B cell (primary cell): ENCODE measurements at regions of chr1 and their contacts with region 1.

Region 1: DNA sequence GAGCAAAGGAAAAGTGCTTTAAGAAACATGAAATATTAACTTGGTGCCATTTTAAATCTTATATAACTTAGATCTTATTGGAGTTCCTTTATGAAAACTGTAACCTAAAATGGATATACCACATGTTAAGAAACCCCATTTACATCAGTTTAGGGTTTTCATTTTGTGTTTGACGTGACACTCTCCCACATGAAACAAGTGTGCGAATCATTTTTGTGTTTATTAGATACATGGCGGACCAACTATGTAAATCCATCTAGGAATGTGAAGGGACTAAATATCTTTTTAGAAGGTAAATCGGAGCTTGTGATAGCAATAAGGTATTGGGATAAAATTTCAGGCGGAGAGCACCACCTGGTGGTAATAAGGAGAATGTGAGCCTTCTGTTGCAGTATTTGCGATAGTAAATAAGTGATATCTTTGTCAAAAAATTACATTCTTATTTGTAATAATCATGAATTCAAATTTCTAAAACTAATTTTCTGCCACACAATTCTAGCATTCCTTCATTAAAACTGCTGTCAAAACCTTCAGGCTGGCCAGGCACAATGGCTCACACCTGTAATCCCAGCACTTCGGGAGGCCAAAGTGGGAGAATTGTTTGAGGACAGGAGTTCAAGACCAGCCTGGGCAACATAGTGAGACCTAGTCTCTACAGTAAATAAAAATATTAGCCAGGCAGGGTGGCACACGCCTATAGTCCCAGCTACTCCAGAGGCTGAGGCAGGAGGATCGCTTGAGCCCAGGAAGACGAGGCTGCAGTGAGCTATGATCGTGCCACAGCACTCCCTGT is 31.3 kb downstream of the SMAP2 start:
- DNase-seq: peak; percentile 84
- ATAC-seq: peak; percentile 36
- H3K4me3 ChIP-seq: peak overlapping the region in 1 of 5 experiments; percentile 4
- H3K4me3 Mint-ChIP-seq: peak overlapping the region; percentile 61
- H3K27ac ChIP-seq: peak overlapping the region; percentile 76 to 100
- H3K27ac Mint-ChIP-seq: peak overlapping the region; percentile 92
- H3K4me1 ChIP-seq: peaks cover 54 to 58% of the 10 kb centered on the region in 2 donors
- H3K4me1 Mint-ChIP-seq: peaks cover 62% of the 10 kb centered on the region
- H3K27me3 ChIP-seq: no peaks in the 10 kb centered on the region
- H3K27me3 Mint-ChIP-seq: no peaks in the 10 kb centered on the region
- CTCF ChIP-seq: peak; percentile 88

Region 2: GRCh38 chr1:40257688-40258444 is 147.0 kb before region 1 on chr1 and contains the start of gene ZMPSTE24:
- CTCF ChIA-PET with region 1: interaction called, 6 read pairs
- POLR2A ChIA-PET with region 1: no interaction called
- intact Hi-C with region 1: loop called (anchors 10 kb)
- DNase-seq: peak; percentile 98
- ATAC-seq: peak; percentile 94
- H3K4me3 ChIP-seq: peak within 1 kb of the TSS; percentile 80 to 98 (median 96)
- H3K4me3 Mint-ChIP-seq: peak within 1 kb of the TSS; percentile 97
- H3K27ac ChIP-seq: peak within 1 kb of the TSS; percentile 99
- H3K27ac Mint-ChIP-seq: peak within 1 kb of the TSS; percentile 99
- H3K4me1 ChIP-seq: peaks cover 9 to 10% of the 10 kb centered on the region in 2 donors
- H3K4me1 Mint-ChIP-seq: peaks cover 32% of the 10 kb centered on the region
- H3K27me3 ChIP-seq: no peaks in the 10 kb centered on the region
- H3K27me3 Mint-ChIP-seq: no peaks in the 10 kb centered on the region
- CTCF ChIP-seq: no peak
- total RNA-seq, gene ZMPSTE24: 14.0 and 18.5 TPM in 2 replicates

Region 3: DNA sequence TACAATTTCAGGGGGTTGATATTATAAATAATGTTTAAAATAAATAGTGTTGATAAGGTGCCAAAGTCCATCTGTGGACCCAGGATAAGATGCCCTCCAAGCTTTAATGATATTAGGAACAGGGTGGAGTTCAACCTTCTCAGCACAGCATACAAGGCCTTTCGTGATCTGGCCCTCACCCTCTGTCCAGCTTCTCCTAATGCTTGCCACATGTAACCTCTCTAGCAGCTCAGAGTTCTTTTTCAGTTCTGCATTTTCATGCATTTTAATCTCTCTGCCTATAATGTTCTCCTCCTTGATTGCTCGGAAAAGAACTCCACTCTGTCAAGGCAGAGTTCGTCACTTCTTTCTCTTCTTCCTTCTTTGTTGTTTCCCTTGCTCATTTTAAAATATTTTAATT is 52.7 kb before region 1 on chr1:
- CTCF ChIA-PET with region 1: interaction called, 17 read pairs
- POLR2A ChIA-PET with region 1: no interaction called
- intact Hi-C with region 1: no loop called
- DNase-seq: peak; percentile 58
- ATAC-seq: peak; percentile 95
- H3K4me3 ChIP-seq: no peak overlapping the region
- H3K4me3 Mint-ChIP-seq: peak overlapping the region; percentile 41
- H3K27ac ChIP-seq: peak overlapping the region; percentile 32 to 57
- H3K27ac Mint-ChIP-seq: peak overlapping the region; percentile 87
- H3K4me1 ChIP-seq: peaks cover 37 to 41% of the 10 kb centered on the region in 2 donors
- H3K4me1 Mint-ChIP-seq: peaks cover 52% of the 10 kb centered on the region
- H3K27me3 ChIP-seq: no peaks in the 10 kb centered on the region
- H3K27me3 Mint-ChIP-seq: no peaks in the 10 kb centered on the region
- CTCF ChIP-seq: no peak

Region 4: GRCh38 chr1:40373338-40374283 is 31.3 kb before region 1 on chr1 and contains the start of gene SMAP2:
- CTCF ChIA-PET with region 1: interaction called, 28 read pairs
- POLR2A ChIA-PET with region 1: interaction called, 14 read pairs
- intact Hi-C with region 1: loop called (anchors 2 kb)
- DNase-seq: peak; percentile 95
- ATAC-seq: peak; percentile 88
- H3K4me3 ChIP-seq: peak within 1 kb of the TSS; percentile 76 to 100 (median 97)
- H3K4me3 Mint-ChIP-seq: peak within 1 kb of the TSS; percentile 96
- H3K27ac ChIP-seq: peak within 1 kb of the TSS; percentile 89 to 100
- H3K27ac Mint-ChIP-seq: peak within 1 kb of the TSS; percentile 95
- H3K4me1 ChIP-seq: peaks cover 36 to 37% of the 10 kb centered on the region in 2 donors
- H3K4me1 Mint-ChIP-seq: peaks cover 48% of the 10 kb centered on the region
- H3K27me3 ChIP-seq: no peaks in the 10 kb centered on the region
- H3K27me3 Mint-ChIP-seq: no peaks in the 10 kb centered on the region
- CTCF ChIP-seq: no peak
- total RNA-seq, gene SMAP2: 300 and 305 TPM in 2 replicates